ENCODE measurements at regions of chr11 and their contacts with region 1.

Region 1: DNA sequence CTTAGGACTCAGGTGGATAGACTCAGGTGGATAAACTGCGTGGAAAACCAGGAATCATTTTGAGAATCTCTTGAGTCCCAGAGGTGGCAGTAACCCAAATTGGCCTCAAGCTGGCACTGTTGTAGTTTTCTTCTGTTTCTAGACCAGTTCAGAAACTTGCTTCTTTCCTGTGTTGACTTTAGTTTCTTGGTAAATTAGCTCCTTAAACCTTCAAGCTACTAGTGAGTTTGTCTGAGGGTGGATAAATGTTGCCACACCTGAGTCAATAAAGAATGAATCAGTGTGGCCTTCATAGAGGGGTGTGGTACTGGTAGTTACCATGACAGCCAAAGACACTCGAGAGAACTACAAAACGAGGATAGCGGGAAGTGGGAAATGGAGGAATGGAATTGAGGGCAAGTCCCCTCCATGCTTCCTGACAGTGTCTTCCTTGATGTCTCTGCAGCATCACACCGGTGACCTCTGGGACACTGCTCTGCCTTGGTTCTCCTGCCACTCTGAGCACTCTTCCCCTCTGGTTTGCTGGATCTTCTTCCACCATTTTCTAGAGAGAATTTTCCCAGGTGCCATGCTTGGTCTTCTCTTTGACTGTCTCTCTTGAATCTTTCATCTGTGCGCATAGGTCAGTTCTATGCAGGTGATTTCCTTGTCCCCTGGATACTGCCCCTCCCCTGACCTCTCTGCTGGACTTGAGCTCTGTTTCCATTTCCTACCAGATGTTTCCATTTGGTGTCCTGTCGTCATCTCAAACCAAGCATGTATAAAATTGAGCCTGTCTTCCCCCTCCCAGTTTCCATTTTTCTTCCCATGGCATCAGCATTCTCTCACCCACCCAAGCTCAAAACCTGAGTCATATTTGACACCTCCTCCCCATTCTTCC is 7.2 kb downstream of the POLD4 start:
- DNase-seq: no peak
- H3K4me3 ChIP-seq: no peak overlapping the region
- H3K27ac ChIP-seq: no peak overlapping the region
- H3K4me1 ChIP-seq: no peaks in the 10 kb centered on the region
- H3K27me3 ChIP-seq: no peaks in the 10 kb centered on the region
- CTCF ChIP-seq: peak in 2 of 3 experiments; percentile 68 to 86; a peak in 3 of 4 replicates
- EP300 ChIP-seq: no peak
- POLR2A ChIP-seq: no peak
- RAD21 ChIP-seq: peak; percentile 55 to 63

Region 2: GRCh38 chr11:66958232-66958955 is 387.8 kb before region 1 on chr11 and contains the start of gene PC:
- CTCF ChIA-PET with region 1: no interaction called
- POLR2A ChIA-PET with region 1: no interaction called
- DNase-seq: peak; percentile 97 to 100
- H3K4me3 ChIP-seq: peak within 1 kb of the TSS; percentile 52 to 72 (median 61)
- H3K27ac ChIP-seq: peak within 1 kb of the TSS; percentile 56; the same call in 1 of the 2 replicates
- H3K4me1 ChIP-seq: peaks cover 3 to 16% (median 7%) of the 10 kb centered on the region in 4 experiments
- H3K27me3 ChIP-seq: peaks cover 0 to 6% (median 4%) of the 10 kb centered on the region in 4 experiments; a peak in 4 of 7 replicates
- CTCF ChIP-seq: 0 out of 4 replicates have a peak, but pooled peaks of 1 of the 3 experiments have one; percentile 1
- EP300 ChIP-seq: peak in 1 of 2 experiments; percentile 75; a peak in 1 of 3 replicates
- POLR2A ChIP-seq: peak in 1 of 2 experiments; percentile 56; a peak in 2 of 3 replicates
- RAD21 ChIP-seq: no peak
- total RNA-seq, gene PC: 27.2 and 27.5 TPM in 2 replicates

Region 3: GRCh38 chr11:67310221-67311050 is 35.7 kb before region 1 on chr11:
- CTCF ChIA-PET with region 1: interaction called, 62 read pairs
- POLR2A ChIA-PET with region 1: no interaction called
- DNase-seq: no peak
- H3K4me3 ChIP-seq: no peak overlapping the region
- H3K27ac ChIP-seq: no peak overlapping the region
- H3K4me1 ChIP-seq: no peaks in the 10 kb centered on the region; a peak in 1 of 7 replicates
- H3K27me3 ChIP-seq: no peaks in the 10 kb centered on the region; a peak in 1 of 7 replicates
- CTCF ChIP-seq: no peak
- EP300 ChIP-seq: no peak
- POLR2A ChIP-seq: no peak
- RAD21 ChIP-seq: no peak

Region 4: DNA sequence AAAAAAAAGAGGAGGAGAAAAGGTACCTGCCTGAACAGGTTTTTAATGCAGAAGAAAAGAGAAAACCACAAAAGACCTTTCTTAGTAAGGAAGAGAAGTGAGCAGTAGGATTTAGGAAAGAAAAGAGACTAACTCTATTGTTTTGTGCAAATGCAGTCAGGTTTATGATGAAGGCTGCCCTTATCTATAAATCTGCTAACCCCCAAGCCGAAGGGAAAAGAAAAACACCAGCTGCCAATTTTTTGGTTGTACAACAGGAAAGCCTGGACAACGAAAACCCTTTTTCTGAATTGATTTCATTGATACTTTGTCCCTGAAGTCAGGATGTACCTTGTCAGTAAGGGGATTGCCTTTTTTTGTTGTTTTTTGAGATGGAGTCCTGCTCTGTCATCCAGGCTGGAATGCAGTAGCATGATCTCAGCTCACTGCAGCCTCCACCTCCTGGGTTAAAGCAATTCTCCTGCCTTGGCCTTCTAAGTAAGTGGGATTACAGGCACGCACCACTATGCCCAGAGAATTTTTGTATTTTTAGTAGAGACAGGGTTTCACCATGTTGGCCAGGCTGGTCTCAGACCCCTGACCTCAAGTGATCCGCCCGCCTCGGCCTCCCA is 14.0 kb before region 1 on chr11:
- CTCF ChIA-PET with region 1: interaction called, 56 read pairs
- POLR2A ChIA-PET with region 1: no interaction called
- DNase-seq: no peak
- H3K4me3 ChIP-seq: no peak overlapping the region
- H3K27ac ChIP-seq: no peak overlapping the region
- H3K4me1 ChIP-seq: no peaks in the 10 kb centered on the region
- H3K27me3 ChIP-seq: no peaks in the 10 kb centered on the region
- CTCF ChIP-seq: no peak
- EP300 ChIP-seq: no peak
- POLR2A ChIP-seq: no peak
- RAD21 ChIP-seq: no peak

Region 5: GRCh38 chr11:67373925-67374618 is 27.9 kb after region 1 on chr11:
- CTCF ChIA-PET with region 1: interaction called, 1,305 read pairs
- POLR2A ChIA-PET with region 1: interaction called, 7 read pairs
- DNase-seq: peak; percentile 78 to 79
- H3K4me3 ChIP-seq: peak overlapping the region; percentile 41 to 77 (median 51)
- H3K27ac ChIP-seq: no peak overlapping the region
- H3K4me1 ChIP-seq: peaks cover 0 to 45% (median 38%) of the 10 kb centered on the region in 4 experiments; a peak in 6 of 7 replicates
- H3K27me3 ChIP-seq: peaks cover 7 to 68% (median 57%) of the 10 kb centered on the region in 4 experiments
- CTCF ChIP-seq: peak in 2 of 3 experiments; percentile 29 to 34; a peak in 3 of 4 replicates
- EP300 ChIP-seq: no peak
- POLR2A ChIP-seq: no peak
- RAD21 ChIP-seq: peak in 1 of 2 experiments; percentile 3; a peak in 1 of 4 replicates

Region 6: GRCh38 chr11:67391304-67392132 is 45.4 kb after region 1 on chr11 and contains the start of gene RAD9A:
- CTCF ChIA-PET with region 1: interaction called, 1,305 read pairs
- POLR2A ChIA-PET with region 1: interaction called, 8 read pairs
- DNase-seq: peak; percentile 67 to 91
- H3K4me3 ChIP-seq: peak within 1 kb of the TSS; percentile 63 to 88 (median 69)
- H3K27ac ChIP-seq: peak within 1 kb of the TSS; percentile 35; the same call in 1 of the 2 replicates
- H3K4me1 ChIP-seq: peaks cover 0 to 12% (median 7%) of the 10 kb centered on the region in 4 experiments; a peak in 4 of 7 replicates
- H3K27me3 ChIP-seq: no peaks in the 10 kb centered on the region; a peak in 2 of 7 replicates
- CTCF ChIP-seq: no peak
- EP300 ChIP-seq: peak in 1 of 2 experiments; percentile 78; a peak in 2 of 3 replicates
- POLR2A ChIP-seq: peak in 1 of 2 experiments; percentile 56; a peak in 2 of 3 replicates
- RAD21 ChIP-seq: peak in 1 of 2 experiments; percentile 1; a peak in 1 of 4 replicates
- total RNA-seq, gene RAD9A: 20.8 and 22.2 TPM in 2 replicates

Measured in H1 (cell line).